Activated CD4-positive, alpha-beta memory T cell treated with anti-CD3 and anti-CD28 coated beads for 36 hours (primary cell): ENCODE measurements at regions of chr18 and their contacts with region 1.

Region 1: GRCh38 chr18:27605107-27605834 is 420.2 kb upstream of the CHST9 start:
- DNase-seq: peak; percentile 17
- H3K4me3 Mint-ChIP-seq: no peak overlapping the region
- H3K27ac Mint-ChIP-seq: no peak overlapping the region
- H3K4me1 Mint-ChIP-seq: no peaks in the 10 kb centered on the region
- H3K27me3 Mint-ChIP-seq: no peaks in the 10 kb centered on the region

Region 2: GRCh38 chr18:27616324-27616723 is 11.1 kb after region 1 on chr18:
- CTCF ChIA-PET with region 1: interaction called, 17 read pairs
- POLR2A ChIA-PET with region 1: no interaction called
- intact Hi-C with region 1: no loop called
- DNase-seq: no peak
- H3K4me3 Mint-ChIP-seq: no peak overlapping the region
- H3K27ac Mint-ChIP-seq: no peak overlapping the region
- H3K4me1 Mint-ChIP-seq: no peaks in the 10 kb centered on the region
- H3K27me3 Mint-ChIP-seq: no peaks in the 10 kb centered on the region

Region 3: GRCh38 chr18:27824841-27825681 is 219.8 kb after region 1 on chr18:
- CTCF ChIA-PET with region 1: no interaction called
- POLR2A ChIA-PET with region 1: no interaction called
- intact Hi-C with region 1: no loop called
- DNase-seq: no peak
- H3K4me3 Mint-ChIP-seq: no peak overlapping the region
- H3K27ac Mint-ChIP-seq: no peak overlapping the region
- H3K4me1 Mint-ChIP-seq: no peaks in the 10 kb centered on the region
- H3K27me3 Mint-ChIP-seq: no peaks in the 10 kb centered on the region

Region 4: DNA sequence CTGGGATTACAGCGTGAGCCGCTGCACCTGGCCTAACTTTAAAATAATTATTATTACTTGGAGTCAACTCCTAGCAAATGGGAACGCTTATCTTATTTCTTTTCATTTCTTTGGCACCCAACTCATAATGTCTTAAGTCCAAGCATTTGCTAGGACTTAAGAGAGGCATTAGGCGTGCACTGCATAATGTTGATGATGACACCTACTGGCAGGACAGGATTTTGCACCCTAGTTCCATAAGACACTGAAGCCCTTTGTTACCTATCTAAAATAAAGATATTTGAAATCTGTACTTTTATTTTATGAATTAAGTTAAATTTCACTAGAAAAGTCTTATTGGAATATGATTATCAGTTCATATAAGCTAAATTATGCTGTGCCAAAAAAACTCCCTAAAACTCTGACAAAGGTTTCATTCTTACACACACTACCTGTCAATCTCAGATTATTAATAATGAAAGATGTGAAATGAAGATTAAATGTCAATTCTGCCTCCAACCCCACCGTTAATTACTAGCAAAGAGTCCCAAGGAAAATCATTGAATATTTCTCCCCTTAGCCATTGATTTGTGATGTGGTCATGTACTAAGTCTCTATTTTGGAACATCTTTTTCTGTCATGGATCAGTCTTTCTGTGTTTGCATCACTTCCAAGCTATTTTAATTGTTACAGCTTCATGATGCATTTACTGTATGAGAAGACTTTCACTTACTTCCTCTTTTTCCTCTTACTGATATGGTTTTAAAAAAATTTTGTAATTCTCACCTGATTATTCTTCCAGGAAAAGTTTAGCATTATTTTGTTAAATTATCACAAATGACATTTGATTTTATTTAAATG is 584.3 kb after region 1 on chr18:
- CTCF ChIA-PET with region 1: no interaction called
- POLR2A ChIA-PET with region 1: no interaction called
- intact Hi-C with region 1: loop called (anchors 2 kb)
- DNase-seq: peak; percentile 14
- H3K4me3 Mint-ChIP-seq: no peak overlapping the region
- H3K27ac Mint-ChIP-seq: no peak overlapping the region
- H3K4me1 Mint-ChIP-seq: no peaks in the 10 kb centered on the region
- H3K27me3 Mint-ChIP-seq: no peaks in the 10 kb centered on the region